ENCODE measurements at regions of chr18 and their contacts with region 1.

Region 1: DNA sequence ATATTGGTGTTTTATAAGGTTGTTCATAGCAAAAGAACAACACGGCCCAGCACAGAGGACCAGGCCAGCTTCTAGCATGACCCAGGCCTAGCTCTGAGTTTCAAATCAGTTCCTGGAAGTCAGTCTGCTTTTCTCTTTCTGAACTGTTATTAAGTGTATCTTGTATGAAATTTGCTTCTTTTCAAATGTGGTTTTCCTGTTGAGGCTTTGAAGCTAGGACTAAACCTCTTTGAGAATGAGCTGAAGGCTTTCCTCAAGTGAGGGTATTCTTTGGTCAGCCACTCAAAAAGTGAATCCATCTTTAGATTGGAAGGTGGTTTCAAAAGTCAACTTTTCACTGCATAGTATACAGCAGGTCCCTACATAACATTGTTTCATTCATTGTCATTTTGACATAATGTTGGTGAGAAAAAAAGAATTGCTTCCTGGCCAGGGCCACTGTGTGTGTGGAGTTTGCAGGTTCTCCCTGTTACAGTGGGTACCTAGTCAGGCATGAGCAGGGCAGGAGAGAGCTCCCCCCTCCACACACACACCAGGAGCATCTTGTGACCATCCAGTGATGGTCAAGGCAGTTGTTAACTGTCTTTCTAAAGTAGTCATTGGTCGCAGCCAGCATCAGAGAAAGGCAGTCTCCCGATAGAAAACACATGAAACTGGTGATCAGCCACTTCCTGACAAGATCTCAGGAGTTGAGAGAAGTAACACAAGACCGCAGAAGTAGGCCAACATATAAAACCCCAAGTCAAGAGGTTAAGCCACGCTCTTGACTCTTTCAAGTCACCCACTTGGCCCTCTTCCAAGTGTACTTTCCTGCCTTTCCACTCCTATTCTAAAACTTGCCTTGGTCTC is 6.7 kb upstream of the ACAA2 start:
- DNase-seq: no peak

Region 2: GRCh38 chr18:48771641-48772375 is 1048.2 kb before region 1 on chr18:
- intact Hi-C with region 1: loop called in 1 of 2 experiments (anchors 5 kb)
- DNase-seq: no peak

Measured in posterior vena cava (tissue), 2 donors.